Heart right ventricle (tissue), 16 donors: ENCODE measurements at regions of chr5 and their contacts with region 1.

Region 1: DNA sequence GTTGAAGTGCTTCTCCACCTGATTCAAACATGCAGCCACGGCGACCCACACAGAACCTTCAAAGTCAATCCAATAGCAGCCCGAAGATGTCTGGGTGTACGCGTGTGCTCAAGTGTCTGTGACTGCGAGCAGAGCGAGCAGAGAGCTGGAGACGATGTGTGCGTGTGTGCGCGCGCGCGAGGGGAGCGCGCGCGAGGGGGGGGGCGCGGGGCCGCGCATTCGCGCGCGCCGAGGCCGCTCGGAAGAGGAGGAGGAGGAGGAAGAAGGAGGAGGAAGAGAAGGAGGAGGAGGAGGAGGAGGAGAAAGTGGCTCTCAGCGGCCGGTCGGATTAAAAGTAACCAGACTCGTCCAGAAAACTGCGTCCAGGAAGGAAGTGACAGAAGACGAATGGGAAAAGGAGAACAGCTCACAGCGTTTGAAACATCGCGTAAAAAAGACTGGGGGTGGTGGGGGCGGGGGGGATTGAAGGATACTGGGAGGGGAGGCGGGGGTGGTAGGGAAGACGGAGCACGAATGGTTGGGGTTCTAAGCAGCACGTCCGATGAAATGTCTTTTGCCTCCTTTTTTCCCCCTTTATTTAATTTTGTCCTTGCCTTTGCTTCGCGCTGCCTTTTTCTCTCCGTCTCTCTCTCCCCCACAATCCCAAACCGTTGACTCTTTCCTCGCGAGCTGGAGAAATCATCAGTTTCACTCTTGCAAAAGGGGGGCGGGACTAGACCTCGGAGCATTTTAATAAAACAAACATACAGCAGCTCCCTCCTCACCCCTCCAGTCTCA is at the start of gene MEF2C:
- DNase-seq: peak; percentile 81 to 90
- ATAC-seq: peak; percentile 78 to 92 (median 84)
- H3K4me3 ChIP-seq: peak within 1 kb of the TSS; percentile 54 to 83 (median 70)
- H3K27ac ChIP-seq: peak within 1 kb of the TSS; percentile 71 to 95 (median 91)
- H3K4me1 ChIP-seq: peaks cover 4 to 59% (median 38%) of the 10 kb centered on the region in 9 donors
- H3K27me3 ChIP-seq: no peaks in the 10 kb centered on the region
- CTCF ChIP-seq: no peak
- total RNA-seq, gene MEF2C: 38.8 to 88.7 (median 70.0) TPM

Region 2: GRCh38 chr5:88826646-88827585 is 56.3 kb before region 1 on chr5:
- intact Hi-C with region 1: loop called in 7 of 10 experiments (anchors 2 to 10 kb)
- DNase-seq: peak; percentile 20 to 84
- ATAC-seq: peak; percentile 83 to 93 (median 89)
- H3K4me3 ChIP-seq: peak overlapping the region in 7 of 10 donors; percentile 0 to 37 (median 27)
- H3K27ac ChIP-seq: peak overlapping the region; percentile 45 to 92 (median 80)
- H3K4me1 ChIP-seq: peaks cover 4 to 99% (median 91%) of the 10 kb centered on the region in 9 donors
- H3K27me3 ChIP-seq: no peaks in the 10 kb centered on the region
- CTCF ChIP-seq: no peak

Region 3: GRCh38 chr5:89374144-89374784 is 491.0 kb after region 1 on chr5:
- intact Hi-C with region 1: loop called in 1 of 10 experiments (anchors 10 kb)
- DNase-seq: no peak
- ATAC-seq: no peak
- H3K4me3 ChIP-seq: no peak overlapping the region
- H3K27ac ChIP-seq: no peak overlapping the region
- H3K4me1 ChIP-seq: peaks cover 0 to 5% (median 0%) of the 10 kb centered on the region in 9 donors
- H3K27me3 ChIP-seq: no peaks in the 10 kb centered on the region
- CTCF ChIP-seq: no peak

Region 4: DNA sequence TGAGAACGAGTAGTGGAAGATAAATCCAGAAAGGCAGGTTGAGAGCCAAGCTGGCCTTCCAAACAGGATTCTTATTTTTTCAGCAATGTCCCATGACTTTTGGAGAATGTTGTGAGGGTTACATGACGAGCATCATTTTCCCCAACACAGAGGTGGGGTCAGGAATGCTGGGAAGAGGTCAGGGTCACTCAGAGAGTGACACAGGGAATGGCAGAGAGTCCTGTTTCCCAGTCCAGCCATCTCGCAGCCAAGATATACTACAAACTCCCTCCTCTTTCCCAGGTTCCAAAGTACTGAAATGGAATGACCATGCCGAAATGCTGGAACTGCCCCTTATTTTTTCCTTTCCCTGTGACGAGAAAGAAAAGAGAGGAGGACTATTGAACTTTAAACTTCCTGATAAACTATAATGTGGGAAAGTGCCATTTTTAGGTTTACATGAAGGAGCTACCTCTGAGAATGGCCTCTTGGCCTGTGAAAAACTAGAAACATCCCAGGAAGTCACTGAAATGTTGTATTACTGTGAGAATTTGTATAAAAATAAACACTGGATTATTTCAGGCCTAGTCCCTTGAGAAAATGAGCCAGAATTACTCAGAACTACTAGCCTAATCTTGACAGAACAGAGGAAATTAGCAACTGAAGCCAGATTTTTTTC is 1105.9 kb after region 1 on chr5:
- intact Hi-C with region 1: loop called in 1 of 10 experiments (anchors 10 kb)
- DNase-seq: peak; percentile 14 to 79
- ATAC-seq: peak; percentile 80 to 92 (median 88)
- H3K4me3 ChIP-seq: no peak overlapping the region
- H3K27ac ChIP-seq: peak overlapping the region; percentile 10 to 88 (median 72)
- H3K4me1 ChIP-seq: peaks cover 3 to 40% (median 19%) of the 10 kb centered on the region in 9 donors
- H3K27me3 ChIP-seq: no peaks in the 10 kb centered on the region
- CTCF ChIP-seq: no peak